A549 (cell line): ENCODE measurements at regions of chr16 and their contacts with region 1.

Region 1: GRCh38 chr16:85615852-85616606 is 2.9 kb downstream of the GSE1 start:
- DNase-seq: peak; percentile 79 to 84
- ATAC-seq: peak in 1 of 2 experiments; percentile 37; a peak in 3 of 6 replicates
- H3K4me3 ChIP-seq: peak overlapping the region; percentile 96
- H3K27ac ChIP-seq: peak overlapping the region; percentile 98 to 99; a peak in 5 of 6 replicates
- H3K4me1 ChIP-seq: peaks cover 22% of the 10 kb centered on the region
- CTCF ChIP-seq: peak; percentile 76
- EP300 ChIP-seq: no peak
- POLR2A ChIP-seq: no peak
- RAD21 ChIP-seq: peak; percentile 53 to 55

Region 2: DNA sequence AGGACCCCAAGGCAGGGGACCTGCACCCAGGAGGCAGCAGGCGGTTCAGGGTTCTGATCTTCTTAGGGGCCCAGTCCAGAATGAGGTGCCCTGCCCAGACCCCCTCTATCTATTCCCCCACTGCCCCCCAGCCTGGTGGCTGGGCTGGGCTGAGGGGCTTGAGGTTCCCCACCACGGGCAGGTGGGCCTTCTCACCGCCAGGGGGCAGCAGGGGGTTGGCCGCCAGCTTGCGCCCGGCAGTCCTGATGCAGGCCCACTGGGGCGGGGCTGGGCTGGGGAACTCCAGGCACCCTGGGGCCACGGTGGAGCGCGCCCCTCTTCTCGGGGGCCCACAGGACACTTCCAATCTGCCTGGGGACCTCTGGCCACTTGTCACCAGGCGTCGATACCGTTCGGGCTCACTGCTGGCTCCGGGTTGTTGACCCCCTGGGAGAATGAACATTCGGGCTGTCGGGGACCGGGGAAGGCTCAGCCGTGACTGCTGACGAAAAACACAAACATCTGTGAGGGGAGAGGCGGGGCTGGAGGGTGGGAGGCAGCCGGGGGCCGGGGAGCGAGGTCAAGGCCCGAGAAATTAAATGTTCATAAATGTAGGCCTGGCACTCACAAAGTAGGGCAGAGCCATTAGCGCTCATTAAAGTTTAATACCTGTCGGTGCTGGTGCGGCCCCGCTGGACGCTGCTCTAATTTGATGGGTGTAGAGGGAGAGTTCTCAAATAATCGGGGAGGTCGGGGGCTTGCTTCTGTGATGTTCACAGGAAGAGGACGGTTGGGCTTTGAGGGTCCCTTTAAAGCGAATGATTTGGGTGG is 222.2 kb before region 1 on chr16:
- CTCF ChIA-PET with region 1: interaction called, 36 read pairs
- POLR2A ChIA-PET with region 1: interaction called, 5 read pairs
- DNase-seq: peak; percentile 65 to 84
- ATAC-seq: peak; percentile 40 to 69; a peak in 3 of 6 replicates
- H3K4me3 ChIP-seq: no peak overlapping the region
- H3K27ac ChIP-seq: peak overlapping the region in 1 of 2 experiments; percentile 86; a peak in 4 of 6 replicates
- H3K4me1 ChIP-seq: peaks cover 67% of the 10 kb centered on the region
- CTCF ChIP-seq: peak; percentile 84
- EP300 ChIP-seq: no peak
- POLR2A ChIP-seq: no peak
- RAD21 ChIP-seq: peak; percentile 58 to 69

Region 3: DNA sequence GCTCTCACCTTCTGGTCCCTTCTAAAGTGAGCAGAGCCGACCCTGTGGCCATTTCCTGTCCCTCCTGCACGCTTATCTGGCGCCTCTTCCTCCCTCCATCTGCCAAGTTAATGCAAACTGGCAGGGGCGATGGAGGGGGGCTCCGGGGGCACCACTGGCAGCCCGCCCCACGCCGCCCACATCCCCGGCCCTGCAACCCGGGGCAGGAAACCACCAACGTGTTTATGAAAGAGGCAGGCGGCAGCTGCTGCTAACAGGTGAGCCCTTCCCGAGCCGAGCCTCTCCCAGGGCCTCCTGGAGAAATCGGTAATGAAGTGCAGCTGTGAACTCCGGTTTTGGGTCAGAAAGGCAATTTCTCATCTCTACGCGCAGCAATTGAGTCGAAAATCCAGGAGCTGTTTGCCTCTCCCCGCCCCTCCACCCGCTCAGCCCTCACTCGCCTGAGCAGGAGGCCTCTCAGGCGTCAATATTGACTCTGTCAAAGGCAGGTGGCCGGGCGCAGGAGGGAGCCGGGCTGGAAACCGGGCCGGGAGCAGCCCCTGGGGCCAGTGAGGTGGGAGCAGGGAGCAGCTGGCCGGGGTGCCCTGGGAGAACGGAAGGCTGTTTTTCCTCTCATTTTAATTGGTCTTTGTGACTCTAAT is 167.4 kb before region 1 on chr16:
- CTCF ChIA-PET with region 1: interaction called, 13 read pairs
- POLR2A ChIA-PET with region 1: no interaction called
- DNase-seq: no peak
- ATAC-seq: no peak
- H3K4me3 ChIP-seq: no peak overlapping the region
- H3K27ac ChIP-seq: no peak overlapping the region
- H3K4me1 ChIP-seq: no peaks in the 10 kb centered on the region
- CTCF ChIP-seq: no peak
- EP300 ChIP-seq: no peak
- POLR2A ChIP-seq: no peak
- RAD21 ChIP-seq: no peak

Region 4: GRCh38 chr16:85554112-85554813 is 61.8 kb before region 1 on chr16:
- CTCF ChIA-PET with region 1: interaction called, 23 read pairs
- POLR2A ChIA-PET with region 1: interaction called, 14 read pairs
- DNase-seq: peak; percentile 81 to 88
- ATAC-seq: peak; percentile 54 to 72
- H3K4me3 ChIP-seq: peak overlapping the region; percentile 71
- H3K27ac ChIP-seq: peak overlapping the region; percentile 91 to 99
- H3K4me1 ChIP-seq: peaks cover 23% of the 10 kb centered on the region
- CTCF ChIP-seq: no peak
- EP300 ChIP-seq: no peak
- POLR2A ChIP-seq: 0 out of 2 replicates have a peak, but pooled peaks have one; percentile 29
- RAD21 ChIP-seq: no peak

Region 5: DNA sequence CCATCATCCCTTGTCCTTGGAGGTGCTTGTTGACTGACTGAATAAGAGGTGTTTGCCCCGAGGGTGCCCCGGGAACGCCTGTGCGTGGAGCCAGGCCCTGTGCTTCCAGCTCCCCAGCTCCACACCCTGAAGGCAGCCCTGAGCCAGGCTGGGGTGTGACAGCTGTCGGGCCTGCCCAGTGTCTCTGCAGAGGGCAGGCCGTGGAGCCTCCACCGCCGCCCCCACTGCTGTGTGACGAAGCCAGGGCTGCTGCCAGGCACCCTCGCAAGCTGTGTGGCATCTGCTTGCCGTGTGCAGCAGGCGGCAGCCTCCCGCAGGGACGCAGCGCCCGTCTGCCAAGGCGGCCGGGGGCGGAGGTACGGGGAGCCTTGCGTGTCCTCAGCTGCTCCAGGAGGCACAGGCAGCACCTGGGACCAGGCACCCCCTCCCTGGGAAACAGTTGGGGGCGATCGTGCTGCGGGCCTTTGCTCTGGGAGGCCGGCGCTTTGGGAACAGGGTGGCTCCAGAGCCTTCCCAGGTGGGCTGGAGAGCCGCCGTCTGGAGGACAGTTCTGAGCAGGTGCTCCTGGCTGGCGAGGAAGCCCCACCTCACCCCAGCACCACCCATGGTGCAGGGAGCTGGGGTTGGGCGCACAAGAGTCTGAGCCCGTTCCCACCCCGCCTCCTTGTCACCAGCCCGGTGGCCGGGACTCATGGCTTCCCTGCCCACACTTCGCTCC is 23.7 kb after region 1 on chr16:
- CTCF ChIA-PET with region 1: interaction called, 50 read pairs
- POLR2A ChIA-PET with region 1: no interaction called
- DNase-seq: no peak
- ATAC-seq: no peak
- H3K4me3 ChIP-seq: no peak overlapping the region
- H3K27ac ChIP-seq: no peak overlapping the region
- H3K4me1 ChIP-seq: peaks cover 12% of the 10 kb centered on the region; the same call in 2 of the 3 replicates
- CTCF ChIP-seq: no peak
- EP300 ChIP-seq: no peak
- POLR2A ChIP-seq: no peak
- RAD21 ChIP-seq: no peak

Region 6: DNA sequence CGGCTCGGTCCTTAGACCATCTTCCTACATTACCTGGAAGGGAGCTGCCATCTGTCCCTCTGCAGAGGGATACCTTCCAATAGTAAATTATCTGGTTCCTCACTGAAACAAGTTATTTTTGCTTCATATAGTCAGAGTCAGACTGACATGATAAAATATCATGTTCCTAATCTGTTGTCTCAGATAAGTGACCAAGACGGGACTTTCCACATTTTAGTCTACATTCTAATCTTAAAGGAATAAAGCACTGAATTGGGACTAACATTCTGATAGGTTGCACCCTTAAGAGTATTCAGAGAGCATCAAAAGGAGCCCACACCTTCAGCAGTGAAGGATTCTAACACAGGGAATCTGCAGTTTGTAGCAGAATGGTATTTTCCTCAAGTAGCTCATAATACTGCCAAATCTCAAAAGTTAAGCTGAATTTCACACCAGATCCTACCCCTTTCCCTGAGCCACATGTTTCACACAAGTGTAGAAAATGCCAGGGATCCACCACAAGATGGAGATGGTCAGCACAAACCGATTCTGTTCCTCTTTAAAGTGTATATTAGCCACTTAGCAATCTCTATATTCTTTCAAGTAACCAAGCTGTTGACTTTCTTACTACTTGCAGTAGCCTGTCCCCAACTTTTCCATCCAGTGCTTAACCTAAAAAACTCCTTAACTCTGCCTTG is 59.4 kb after region 1 on chr16:
- CTCF ChIA-PET with region 1: interaction called, 12 read pairs
- POLR2A ChIA-PET with region 1: no interaction called
- DNase-seq: peak; percentile 36 to 45
- ATAC-seq: peak; percentile 73 to 76; a peak in 4 of 6 replicates
- H3K4me3 ChIP-seq: no peak overlapping the region
- H3K27ac ChIP-seq: no peak overlapping the region
- H3K4me1 ChIP-seq: no peaks in the 10 kb centered on the region
- CTCF ChIP-seq: peak; percentile 53
- EP300 ChIP-seq: no peak
- POLR2A ChIP-seq: no peak
- RAD21 ChIP-seq: peak in 1 of 2 experiments; percentile 29; a peak in 1 of 5 replicates

Region 7: DNA sequence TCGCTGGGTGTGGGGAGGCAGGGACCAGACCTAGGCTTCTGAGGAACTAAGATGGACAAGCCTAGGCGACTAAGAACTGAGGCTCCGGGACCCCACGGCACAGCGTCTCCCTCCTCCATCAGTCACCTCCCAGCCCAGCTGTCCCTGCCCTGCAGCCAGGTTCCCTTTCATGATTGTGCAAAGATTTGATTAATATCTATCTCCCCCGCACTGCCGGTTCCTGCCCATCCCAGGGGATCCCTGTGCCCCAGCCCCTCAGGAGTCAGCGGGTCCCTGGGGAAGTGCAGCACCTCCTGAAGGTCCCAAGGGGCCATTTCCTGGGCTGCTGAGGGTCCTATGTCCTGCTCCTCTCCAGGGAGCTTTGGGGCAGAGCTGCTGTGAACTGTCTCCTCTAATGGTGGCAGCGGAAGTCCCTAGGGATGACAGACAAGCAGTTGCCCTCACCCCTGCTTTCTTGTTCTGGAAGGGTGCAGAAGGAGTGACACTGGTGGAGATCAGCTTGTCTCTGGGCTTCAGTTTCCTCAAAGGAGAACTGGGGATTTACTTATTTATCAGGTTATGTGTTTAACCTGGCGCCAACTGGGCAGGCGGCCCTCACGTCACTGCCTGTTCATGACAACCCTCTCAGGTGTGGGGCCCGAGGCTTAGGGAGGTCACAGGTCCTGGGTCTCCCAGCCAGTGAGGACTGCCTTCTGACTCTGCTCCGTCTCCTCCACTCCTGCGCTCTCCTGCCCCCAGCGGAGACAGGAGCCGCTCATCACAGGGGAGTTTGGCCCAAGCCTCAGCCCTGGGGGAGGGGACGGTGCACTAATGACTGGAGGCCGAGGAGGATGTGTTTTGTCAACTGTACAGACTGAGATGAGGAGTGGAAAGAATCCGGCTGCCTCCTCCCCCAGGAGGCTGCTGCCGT is 136.7 kb after region 1 on chr16:
- CTCF ChIA-PET with region 1: no interaction called
- POLR2A ChIA-PET with region 1: no interaction called
- DNase-seq: no peak
- ATAC-seq: peak; percentile 15 to 53; a peak in 4 of 6 replicates
- H3K4me3 ChIP-seq: no peak overlapping the region
- H3K27ac ChIP-seq: no peak overlapping the region
- H3K4me1 ChIP-seq: peaks cover 19% of the 10 kb centered on the region
- CTCF ChIP-seq: no peak
- EP300 ChIP-seq: no peak
- POLR2A ChIP-seq: no peak
- RAD21 ChIP-seq: no peak